ENCODE measurements at regions of chr11 and their contacts with region 1.

Region 1: GRCh38 chr11:123033895-123034294 is 28.0 kb downstream of the HSPA8 start:
- DNase-seq: no peak
- H3K4me3 Mint-ChIP-seq: no peak overlapping the region
- H3K27ac Mint-ChIP-seq: no peak overlapping the region
- H3K4me1 Mint-ChIP-seq: no peaks in the 10 kb centered on the region
- H3K27me3 Mint-ChIP-seq: peaks cover 2% of the 10 kb centered on the region

Region 2: DNA sequence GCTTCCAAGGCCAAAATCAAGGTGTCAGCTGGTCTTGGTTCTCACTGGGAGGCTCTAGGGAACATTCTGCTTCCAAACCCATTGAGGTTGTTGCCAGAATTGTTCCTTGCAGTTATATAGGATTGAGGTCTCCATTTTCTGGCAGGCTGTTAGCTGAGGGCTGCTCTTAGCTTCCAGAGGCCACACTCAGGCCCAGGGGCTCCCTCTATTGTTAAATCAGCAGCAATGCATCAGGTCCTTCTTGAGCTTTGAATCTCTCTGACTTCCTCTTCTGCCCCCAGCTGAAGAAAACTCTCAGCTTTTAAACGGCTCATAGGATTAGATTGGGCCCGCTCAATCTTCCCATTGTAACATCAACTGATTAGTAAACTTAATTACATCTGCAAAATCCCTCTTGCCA is 12.9 kb before region 1 on chr11:
- CTCF ChIA-PET with region 1: interaction called, 16 read pairs
- POLR2A ChIA-PET with region 1: no interaction called
- DNase-seq: peak; percentile 38
- H3K4me3 Mint-ChIP-seq: no peak overlapping the region
- H3K27ac Mint-ChIP-seq: no peak overlapping the region
- H3K4me1 Mint-ChIP-seq: peaks cover 6% of the 10 kb centered on the region
- H3K27me3 Mint-ChIP-seq: peaks cover 18% of the 10 kb centered on the region

Region 3: GRCh38 chr11:123045101-123045500 is 11.2 kb after region 1 on chr11:
- CTCF ChIA-PET with region 1: interaction called, 10 read pairs
- POLR2A ChIA-PET with region 1: no interaction called
- DNase-seq: no peak
- H3K4me3 Mint-ChIP-seq: no peak overlapping the region
- H3K27ac Mint-ChIP-seq: no peak overlapping the region
- H3K4me1 Mint-ChIP-seq: no peaks in the 10 kb centered on the region
- H3K27me3 Mint-ChIP-seq: peaks cover 7% of the 10 kb centered on the region

Measured in activated CD4-positive, alpha-beta memory T cell treated with anti-CD3 and anti-CD28 coated beads, Interleukin-2, amount 10 ng/mL, durations not matched to agents 7 days and 5 days (primary cell).